Endothelial cell of umbilical vein (primary cell): ENCODE measurements at regions of chr13 and their contacts with region 1.

Region 1: DNA sequence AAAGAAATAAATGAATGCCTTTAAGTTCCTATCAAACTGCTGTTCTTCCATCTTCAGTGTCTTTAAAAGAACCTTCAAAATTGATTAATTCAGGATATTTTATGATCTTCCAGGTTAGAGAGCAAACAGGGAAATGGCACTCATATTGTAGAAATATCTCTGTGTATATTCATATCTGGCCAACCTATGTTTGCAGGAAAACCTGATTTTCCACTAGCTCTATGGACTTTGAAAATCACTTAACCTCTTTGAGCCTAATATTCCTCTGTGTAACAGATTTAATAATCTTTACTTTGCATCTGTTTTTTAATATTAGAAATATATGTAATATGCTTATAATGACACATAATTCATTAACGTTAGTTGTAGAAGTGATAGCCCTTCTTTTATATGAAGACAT is 227.7 kb upstream of the ATXN8OS start:
- DNase-seq: no peak
- H3K4me3 ChIP-seq: no peak overlapping the region
- H3K27ac ChIP-seq: no peak overlapping the region
- H3K4me1 ChIP-seq: no peaks in the 10 kb centered on the region
- H3K27me3 ChIP-seq: no peaks in the 10 kb centered on the region
- CTCF ChIP-seq: no peak
- POLR2A ChIP-seq: no peak

Region 2: GRCh38 chr13:68199271-68199670 is 1680.7 kb before region 1 on chr13:
- CTCF ChIA-PET with region 1: no interaction called
- POLR2A ChIA-PET with region 1: no interaction called
- dilution Hi-C with region 1: no loop called
- intact Hi-C with region 1: loop called (anchors 10 kb)
- DNase-seq: no peak
- H3K4me3 ChIP-seq: no peak overlapping the region
- H3K27ac ChIP-seq: no peak overlapping the region
- H3K4me1 ChIP-seq: no peaks in the 10 kb centered on the region
- H3K27me3 ChIP-seq: no peaks in the 10 kb centered on the region
- CTCF ChIP-seq: no peak
- POLR2A ChIP-seq: no peak

Region 3: DNA sequence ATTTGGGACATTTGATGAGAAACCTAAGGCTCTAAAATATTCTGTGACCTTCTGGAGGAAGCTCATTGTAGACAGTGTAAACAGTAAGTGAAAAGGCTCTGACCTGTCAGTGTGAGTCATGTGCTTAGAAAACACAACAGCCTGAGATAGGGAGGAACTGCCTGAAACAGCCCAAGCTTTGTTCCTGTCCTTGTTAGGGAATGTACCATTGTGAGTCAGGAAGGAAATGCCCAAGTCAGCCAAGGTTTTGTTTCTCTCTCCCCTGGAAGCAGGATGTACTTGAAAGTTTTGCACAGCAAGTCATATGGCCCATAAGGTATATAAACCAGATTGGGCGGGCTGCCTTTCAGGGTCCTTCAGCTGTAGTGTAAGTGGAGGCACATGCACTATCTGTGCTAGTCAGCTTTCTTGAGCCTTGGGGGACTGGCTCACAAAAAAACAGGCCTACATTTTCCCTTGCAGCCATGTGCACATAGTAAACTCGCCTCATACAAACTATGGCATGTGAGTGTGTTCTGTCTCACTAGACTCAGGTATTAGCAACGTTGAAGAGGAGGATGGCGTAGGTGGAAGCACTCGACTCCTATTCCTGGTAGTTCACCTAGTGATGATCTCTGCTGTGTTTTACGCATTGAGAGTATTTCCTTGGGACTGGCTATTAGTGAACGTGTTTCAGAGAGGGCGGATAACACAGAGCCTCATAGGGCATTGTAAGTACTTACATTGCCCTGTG is 369.6 kb after region 1 on chr13:
- CTCF ChIA-PET with region 1: no interaction called
- POLR2A ChIA-PET with region 1: no interaction called
- dilution Hi-C with region 1: no loop called
- intact Hi-C with region 1: no loop called
- DNase-seq: peak; percentile 53
- H3K4me3 ChIP-seq: no peak overlapping the region
- H3K27ac ChIP-seq: peak overlapping the region; percentile 11
- H3K4me1 ChIP-seq: peaks cover 3% of the 10 kb centered on the region
- H3K27me3 ChIP-seq: no peaks in the 10 kb centered on the region
- CTCF ChIP-seq: no peak
- POLR2A ChIP-seq: no peak